Right lobe of liver (tissue), 6 donors: ENCODE measurements at regions of chr3 and their contacts with region 1.

Region 1: DNA sequence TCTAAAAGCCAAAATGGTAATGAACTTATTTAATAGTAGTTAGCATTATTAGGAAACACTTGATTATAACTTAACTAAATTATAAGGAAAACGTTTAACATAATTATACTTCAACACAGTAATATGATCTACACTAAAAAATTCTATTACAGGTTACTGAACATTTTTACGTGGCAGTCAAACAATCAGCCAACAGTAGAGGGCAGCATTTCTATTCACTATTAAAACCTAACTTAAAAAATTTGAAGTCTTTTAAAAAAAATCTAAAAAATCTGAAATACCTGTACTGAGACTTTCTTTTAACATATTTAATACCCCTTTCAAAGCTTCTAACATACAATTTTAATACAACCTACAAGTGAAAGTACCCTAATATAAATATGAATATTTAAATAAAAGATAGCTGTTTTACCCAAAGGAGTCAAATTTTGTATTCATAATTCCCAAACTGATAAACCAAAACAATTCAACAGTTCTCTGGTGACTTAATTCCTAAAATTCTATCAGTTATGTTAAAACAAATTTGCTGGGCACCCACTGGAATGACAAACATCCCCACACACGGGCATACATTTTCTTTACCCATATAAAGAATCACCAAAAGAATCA is 41.5 kb downstream of the DLG1 start:
- DNase-seq: no peak
- ATAC-seq: peak; percentile 41 to 67 (median 54)
- H3K4me3 ChIP-seq: no peak overlapping the region
- H3K27ac ChIP-seq: no peak overlapping the region
- H3K4me1 ChIP-seq: peaks cover 0 to 3% (median 0%) of the 10 kb centered on the region in 4 donors
- H3K27me3 ChIP-seq: no peaks in the 10 kb centered on the region
- CTCF ChIP-seq: peak; percentile 58 to 75 (median 74)
- POLR2A ChIP-seq: no peak

Region 2: DNA sequence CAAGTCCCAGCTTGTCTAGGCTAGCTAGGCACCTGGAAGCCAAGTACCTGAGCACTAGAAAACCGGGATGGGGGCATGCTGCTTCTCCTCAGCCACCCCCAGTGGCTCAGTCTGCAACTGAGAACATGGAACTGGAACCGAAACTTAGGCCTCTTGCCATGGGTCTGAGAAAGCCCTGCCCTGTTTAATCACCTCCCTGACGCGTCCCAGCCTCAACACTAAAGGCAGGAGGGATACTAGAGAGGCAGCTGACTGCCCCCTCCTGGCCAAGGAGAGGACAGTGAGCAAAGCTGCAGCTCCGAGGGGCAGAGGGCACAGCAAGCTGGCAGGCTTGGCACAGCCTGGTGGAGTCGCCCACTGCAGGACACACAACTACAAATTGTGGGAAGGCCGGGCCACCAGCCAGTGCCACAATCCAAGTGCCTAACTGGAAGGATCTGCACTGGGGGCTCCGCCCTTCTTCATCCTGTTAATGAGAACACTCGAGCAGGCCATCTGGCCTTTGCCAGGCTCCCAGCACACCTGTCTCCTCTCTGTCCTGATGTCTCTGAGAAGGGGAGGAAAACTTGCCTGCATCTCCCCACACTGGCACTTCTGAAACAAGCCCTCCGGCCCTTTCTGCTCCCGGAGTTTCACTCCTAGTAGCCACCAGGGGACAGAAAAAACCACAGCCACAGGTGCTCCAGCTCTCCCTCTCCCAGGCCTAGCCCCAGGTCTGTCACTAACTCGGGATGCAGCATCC is 245.1 kb after region 1 on chr3:
- intact Hi-C with region 1: loop called (anchors 10 kb)
- DNase-seq: peak; percentile 63 to 74 (median 69)
- ATAC-seq: peak; percentile 86 to 91 (median 90)
- H3K4me3 ChIP-seq: no peak overlapping the region
- H3K27ac ChIP-seq: no peak overlapping the region
- H3K4me1 ChIP-seq: peaks cover 0 to 15% (median 0%) of the 10 kb centered on the region in 4 donors
- H3K27me3 ChIP-seq: no peaks in the 10 kb centered on the region
- CTCF ChIP-seq: peak; percentile 62 to 74 (median 68)
- POLR2A ChIP-seq: no peak